Activated B cell treated with CpG ODN at 0.5 μM for 24 hours (primary cell): ENCODE measurements at regions of chr4 and their contacts with region 1.

Region 1: GRCh38 chr4:80202190-80202711 is 4.9 kb downstream of the PRDM8 start:
- DNase-seq: peak; percentile 84
- ATAC-seq: peak; percentile 68
- H3K4me3 Mint-ChIP-seq: peak overlapping the region; percentile 79
- H3K27ac Mint-ChIP-seq: peak overlapping the region; percentile 81
- H3K4me1 Mint-ChIP-seq: peaks cover 23% of the 10 kb centered on the region
- H3K27me3 Mint-ChIP-seq: peaks cover 4% of the 10 kb centered on the region
- CTCF ChIP-seq: no peak

Region 2: GRCh38 chr4:78938868-78939666 is 1263.2 kb before region 1 on chr4 and contains the start of gene PAQR3:
- CTCF ChIA-PET with region 1: no interaction called
- POLR2A ChIA-PET with region 1: no interaction called
- intact Hi-C with region 1: loop called (anchors 5 kb)
- DNase-seq: peak; percentile 90
- ATAC-seq: peak; percentile 98
- H3K4me3 Mint-ChIP-seq: peak within 1 kb of the TSS; percentile 96
- H3K27ac Mint-ChIP-seq: peak within 1 kb of the TSS; percentile 84
- H3K4me1 Mint-ChIP-seq: peaks cover 20% of the 10 kb centered on the region
- H3K27me3 Mint-ChIP-seq: no peaks in the 10 kb centered on the region
- CTCF ChIP-seq: no peak
- total RNA-seq, gene PAQR3: 10.2 and 10.3 TPM in 2 replicates

Region 3: GRCh38 chr4:80072744-80073472 is 129.3 kb before region 1 on chr4 and contains the start of gene ANTXR2:
- CTCF ChIA-PET with region 1: interaction called, 17 read pairs
- POLR2A ChIA-PET with region 1: interaction called, 20 read pairs
- intact Hi-C with region 1: loop called (anchors 1 kb)
- DNase-seq: peak; percentile 73
- ATAC-seq: peak; percentile 78
- H3K4me3 Mint-ChIP-seq: peak within 1 kb of the TSS; percentile 94
- H3K27ac Mint-ChIP-seq: peak within 1 kb of the TSS; percentile 97
- H3K4me1 Mint-ChIP-seq: peaks cover 56% of the 10 kb centered on the region
- H3K27me3 Mint-ChIP-seq: no peaks in the 10 kb centered on the region
- CTCF ChIP-seq: no peak
- total RNA-seq, gene ANTXR2: 14.2 and 19.6 TPM in 2 replicates

Region 4: DNA sequence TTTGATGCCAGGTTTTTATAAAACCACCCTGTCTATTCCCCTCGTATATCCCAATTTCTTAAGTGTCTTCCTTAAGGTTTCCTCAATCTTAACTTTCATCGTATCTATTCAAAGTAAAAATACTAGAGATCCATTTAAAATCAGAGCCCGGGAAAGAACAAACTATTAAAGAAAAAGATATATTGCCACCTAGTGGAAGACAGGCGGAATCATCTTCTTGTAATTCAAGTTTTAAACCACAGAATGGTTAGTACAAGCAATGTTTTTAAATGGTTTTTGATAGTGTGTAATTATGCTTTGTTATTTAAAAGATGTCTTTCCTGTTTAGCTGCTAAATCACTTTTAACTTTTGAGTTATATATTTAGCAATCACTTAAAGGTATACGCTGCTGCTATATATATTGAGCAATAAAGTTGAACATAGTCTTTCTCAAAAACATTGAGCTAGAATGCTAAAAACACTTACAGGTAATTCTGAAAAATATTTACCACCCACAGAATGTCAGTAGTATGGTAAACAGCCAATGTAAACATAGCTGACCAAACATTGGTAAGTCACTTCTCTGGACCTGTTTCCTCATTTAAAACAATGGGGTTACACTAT is 13.3 kb after region 1 on chr4:
- CTCF ChIA-PET with region 1: interaction called, 16 read pairs
- POLR2A ChIA-PET with region 1: interaction called, 4 read pairs
- intact Hi-C with region 1: loop called (anchors 1 kb)
- DNase-seq: no peak
- ATAC-seq: no peak
- H3K4me3 Mint-ChIP-seq: no peak overlapping the region
- H3K27ac Mint-ChIP-seq: no peak overlapping the region
- H3K4me1 Mint-ChIP-seq: peaks cover 2% of the 10 kb centered on the region
- H3K27me3 Mint-ChIP-seq: peaks cover 28% of the 10 kb centered on the region
- CTCF ChIP-seq: peak; percentile 86

Region 5: DNA sequence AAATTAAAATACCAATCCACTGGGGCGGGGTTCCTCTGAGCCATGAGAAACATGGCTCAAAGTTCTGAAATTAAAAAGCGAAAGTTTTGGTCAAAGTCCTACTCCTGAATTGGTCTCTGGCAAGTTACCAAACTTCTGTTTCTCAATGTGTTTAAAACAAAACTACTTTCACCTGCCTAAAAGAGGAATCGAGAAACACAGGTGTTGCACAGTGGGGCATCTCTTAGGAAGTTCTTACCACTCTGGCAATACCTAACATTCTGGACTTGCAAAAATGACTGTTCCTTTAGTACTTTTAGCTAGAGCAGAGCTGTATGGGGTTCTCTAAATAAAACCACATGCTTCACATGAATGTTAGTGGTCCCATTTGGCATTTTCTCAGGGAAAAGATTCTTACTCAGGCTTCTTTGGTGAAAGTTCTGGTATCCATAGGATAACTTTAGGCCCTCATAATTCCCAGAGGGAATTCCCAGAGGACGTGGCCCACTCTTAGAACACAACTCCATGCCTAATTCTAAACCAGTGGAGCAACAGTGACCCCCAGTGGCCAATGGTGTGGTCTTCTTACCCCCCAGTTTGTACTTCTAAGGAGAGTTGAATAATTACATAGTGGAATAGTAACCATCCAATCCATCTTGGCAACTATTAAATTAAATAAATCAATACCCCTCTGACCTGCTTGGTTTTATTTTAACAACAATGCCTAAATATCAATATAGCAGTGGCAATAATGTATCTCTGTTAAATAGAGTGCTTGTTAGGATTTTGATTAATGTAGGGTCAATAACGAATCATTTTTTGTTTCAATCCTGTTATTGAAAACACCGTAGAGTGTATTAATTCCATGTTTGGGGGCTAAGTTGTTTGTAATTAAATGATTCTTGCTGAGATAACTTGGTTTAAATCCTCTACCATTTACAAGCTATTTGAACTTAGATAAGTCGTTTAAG is 850.1 kb after region 1 on chr4:
- CTCF ChIA-PET with region 1: no interaction called
- POLR2A ChIA-PET with region 1: no interaction called
- intact Hi-C with region 1: loop called (anchors 5 kb)
- DNase-seq: peak; percentile 31
- ATAC-seq: peak; percentile 84
- H3K4me3 Mint-ChIP-seq: no peak overlapping the region
- H3K27ac Mint-ChIP-seq: no peak overlapping the region
- H3K4me1 Mint-ChIP-seq: peaks cover 14% of the 10 kb centered on the region
- H3K27me3 Mint-ChIP-seq: no peaks in the 10 kb centered on the region
- CTCF ChIP-seq: no peak